ENCODE measurements at regions of chr9 and their contacts with region 1.

Region 1: DNA sequence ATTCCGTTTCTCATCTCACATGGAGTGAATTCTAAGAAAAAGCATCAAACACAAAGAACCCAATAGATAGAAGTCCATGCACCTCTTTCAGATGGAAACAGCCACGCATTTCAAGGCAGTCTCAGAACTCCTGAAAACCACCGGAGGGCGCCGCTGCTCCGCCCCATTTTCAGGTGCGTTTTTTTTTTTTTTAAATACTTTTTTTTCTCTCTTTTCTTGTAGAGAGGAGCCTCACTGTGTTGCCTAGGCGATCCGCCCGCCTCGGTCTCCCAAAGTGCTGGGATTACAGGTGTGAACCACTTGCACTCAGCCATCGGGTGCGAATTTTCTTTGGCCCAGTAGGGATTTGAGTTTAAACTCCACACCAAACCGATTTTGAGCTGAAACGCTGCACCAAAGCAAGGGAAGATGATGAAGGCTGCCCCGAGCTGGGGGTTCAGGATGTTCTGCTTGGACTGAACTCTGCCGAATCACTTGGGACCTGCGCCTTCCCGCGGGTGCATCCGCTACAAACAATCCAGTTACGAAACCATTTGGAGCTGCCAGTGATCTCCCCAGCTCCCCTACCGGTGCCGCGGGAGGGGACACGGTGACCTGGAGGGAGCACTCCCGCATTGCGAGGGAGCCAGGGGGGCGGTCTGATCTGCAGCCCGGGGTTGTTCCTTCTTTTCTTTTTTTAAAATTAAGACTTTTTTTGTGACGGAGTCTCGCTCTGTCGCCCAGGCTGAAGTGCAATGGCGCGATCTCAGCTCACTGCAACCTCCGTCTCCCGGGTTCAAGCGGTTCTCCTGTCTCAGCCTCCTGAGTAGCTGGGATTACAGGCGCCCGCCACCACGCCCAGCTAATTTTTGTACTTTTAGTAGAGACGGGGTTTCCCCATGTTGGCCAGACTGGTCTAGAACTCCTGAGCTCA is 1.4 kb downstream of the PTGR1 start:
- DNase-seq: no peak
- ATAC-seq: peak; percentile 75
- H3K4me3 ChIP-seq: peak overlapping the region; percentile 78
- H3K27ac ChIP-seq: no peak overlapping the region
- H3K4me1 ChIP-seq: no peaks in the 10 kb centered on the region
- H3K27me3 ChIP-seq: peaks cover 0 to 4% of the 10 kb centered on the region in 2 experiments; a peak in 2 of 4 replicates
- CTCF ChIP-seq: peak; percentile 52 to 67 (median 54); a peak in 5 of 6 replicates
- EP300 ChIP-seq: no peak
- POLR2A ChIP-seq: no peak
- RAD21 ChIP-seq: peak; percentile 74

Region 2: GRCh38 chr9:111621895-111622480 is 23.9 kb after region 1 on chr9:
- CTCF ChIA-PET with region 1: interaction called, 28 read pairs
- POLR2A ChIA-PET with region 1: no interaction called
- RAD21 ChIA-PET with region 1: interaction called, 5 read pairs
- SMC1A ChIA-PET with region 1: interaction called, 7 read pairs
- in situ Hi-C with region 1: no loop called
- intact Hi-C with region 1: no loop called
- DNase-seq: no peak
- ATAC-seq: peak; percentile 88
- H3K4me3 ChIP-seq: no peak overlapping the region
- H3K27ac ChIP-seq: no peak overlapping the region
- H3K4me1 ChIP-seq: no peaks in the 10 kb centered on the region
- H3K27me3 ChIP-seq: no peaks in the 10 kb centered on the region
- CTCF ChIP-seq: peak; percentile 75 to 97 (median 89)
- EP300 ChIP-seq: no peak
- POLR2A ChIP-seq: no peak
- RAD21 ChIP-seq: peak; percentile 71